Colonic mucosa (tissue), 4 donors: ENCODE measurements at regions of chr21 and their contacts with region 1.

Region 1: DNA sequence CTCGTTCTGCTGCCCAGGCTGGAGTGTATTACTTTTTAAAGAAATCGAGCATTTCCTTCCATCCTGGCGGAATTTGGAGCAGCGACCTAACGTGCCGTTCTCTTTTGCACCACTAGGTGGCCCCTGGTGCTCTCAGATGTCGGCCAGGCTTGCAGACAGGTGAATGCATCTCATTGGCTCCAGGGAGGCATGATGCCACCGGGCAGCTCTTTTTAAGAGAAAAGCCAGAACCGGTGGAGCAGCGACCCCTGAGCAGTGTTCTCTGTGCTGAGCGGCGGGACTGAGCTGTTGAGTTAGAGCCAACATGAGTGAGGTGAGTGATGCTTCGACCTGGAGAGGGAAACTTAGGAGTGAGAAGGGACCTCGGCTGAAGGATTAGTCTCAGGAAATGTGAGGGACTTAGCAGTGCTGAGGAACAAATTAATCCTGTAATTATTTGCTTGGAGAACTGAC is at the start of gene PCP4:
- DNase-seq: peak; percentile 61
- H3K4me3 ChIP-seq: no peak within 1 kb of the TSS
- H3K27ac ChIP-seq: no peak within 1 kb of the TSS
- H3K4me1 ChIP-seq: no peaks in the 10 kb centered on the region
- H3K27me3 ChIP-seq: no peaks in the 10 kb centered on the region
- CTCF ChIP-seq: peak; percentile 79
- total RNA-seq, gene PCP4: 0.99 to 6.5 TPM

Region 2: GRCh38 chr21:39788383-39788782 is 78.8 kb before region 1 on chr21:
- intact Hi-C with region 1: loop called (anchors 10 kb)
- DNase-seq: peak; percentile 75
- H3K4me3 ChIP-seq: no peak overlapping the region
- H3K27ac ChIP-seq: no peak overlapping the region
- H3K4me1 ChIP-seq: no peaks in the 10 kb centered on the region
- H3K27me3 ChIP-seq: no peaks in the 10 kb centered on the region
- CTCF ChIP-seq: peak; percentile 69

Region 3: GRCh38 chr21:40120940-40121575 is 253.8 kb after region 1 on chr21:
- intact Hi-C with region 1: loop called (anchors 5 kb)
- DNase-seq: no peak
- H3K4me3 ChIP-seq: no peak overlapping the region
- H3K27ac ChIP-seq: no peak overlapping the region
- H3K4me1 ChIP-seq: no peaks in the 10 kb centered on the region
- H3K27me3 ChIP-seq: no peaks in the 10 kb centered on the region
- CTCF ChIP-seq: peak; percentile 56